ENCODE measurements at regions of chr16 and their contacts with region 1.

Region 1: DNA sequence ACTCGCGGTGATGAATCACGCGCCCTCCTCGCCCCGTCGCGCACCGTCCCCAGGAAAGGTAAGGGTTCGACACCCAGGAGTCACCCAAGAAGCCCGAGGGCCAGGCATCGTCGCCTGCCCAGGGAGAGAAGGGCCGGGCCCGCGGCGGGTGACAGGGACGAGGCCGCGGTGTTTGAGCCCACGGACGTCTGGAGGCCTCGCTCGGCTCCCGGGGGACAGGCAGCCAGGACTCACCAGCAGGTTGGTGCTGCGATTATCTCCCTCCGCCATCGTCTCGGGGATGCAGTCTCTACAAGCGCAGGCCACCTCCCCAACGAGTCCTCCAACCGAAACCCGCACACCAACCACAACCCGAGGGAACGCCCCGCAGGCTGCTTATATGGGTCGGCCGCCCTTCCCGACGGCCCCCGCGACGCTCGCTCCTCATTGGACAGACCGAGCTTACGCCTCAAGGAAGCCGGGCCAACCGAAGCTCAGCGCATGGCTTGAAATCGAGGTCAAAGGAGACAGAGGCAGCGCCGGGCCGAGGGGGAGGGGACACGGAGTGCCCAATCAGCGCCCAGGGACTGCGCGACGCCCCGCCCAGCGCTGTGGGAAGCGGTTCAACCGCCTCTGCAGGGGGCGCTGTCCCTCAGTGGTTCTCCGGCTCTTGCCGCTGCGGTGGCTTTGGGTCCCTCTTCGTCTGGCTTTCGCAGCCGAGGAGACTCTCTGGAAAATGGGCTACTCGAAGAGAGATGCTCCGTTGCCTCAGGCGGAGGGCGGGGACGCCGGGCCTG is at the start of gene ARL6IP1:
- DNase-seq: peak; percentile 99 to 100 (median 100)
- H3K4me3 ChIP-seq: peak within 1 kb of the TSS; percentile 65 to 94 (median 92)
- H3K4me3 Mint-ChIP-seq: peak within 1 kb of the TSS; percentile 93 to 98
- H3K27ac ChIP-seq: peak within 1 kb of the TSS; percentile 93 to 95
- H3K27ac Mint-ChIP-seq: peak within 1 kb of the TSS; percentile 93 to 98 (median 95)
- H3K4me1 ChIP-seq: peaks cover 52 to 71% of the 10 kb centered on the region in 2 donors
- H3K4me1 Mint-ChIP-seq: peaks cover 64% of the 10 kb centered on the region
- H3K27me3 ChIP-seq: no peaks in the 10 kb centered on the region
- H3K27me3 Mint-ChIP-seq: no peaks in the 10 kb centered on the region
- CTCF ChIP-seq: peak; percentile 98
- polyA plus RNA-seq, gene ARL6IP1: 89.0 to 158 (median 142) TPM

Region 2: DNA sequence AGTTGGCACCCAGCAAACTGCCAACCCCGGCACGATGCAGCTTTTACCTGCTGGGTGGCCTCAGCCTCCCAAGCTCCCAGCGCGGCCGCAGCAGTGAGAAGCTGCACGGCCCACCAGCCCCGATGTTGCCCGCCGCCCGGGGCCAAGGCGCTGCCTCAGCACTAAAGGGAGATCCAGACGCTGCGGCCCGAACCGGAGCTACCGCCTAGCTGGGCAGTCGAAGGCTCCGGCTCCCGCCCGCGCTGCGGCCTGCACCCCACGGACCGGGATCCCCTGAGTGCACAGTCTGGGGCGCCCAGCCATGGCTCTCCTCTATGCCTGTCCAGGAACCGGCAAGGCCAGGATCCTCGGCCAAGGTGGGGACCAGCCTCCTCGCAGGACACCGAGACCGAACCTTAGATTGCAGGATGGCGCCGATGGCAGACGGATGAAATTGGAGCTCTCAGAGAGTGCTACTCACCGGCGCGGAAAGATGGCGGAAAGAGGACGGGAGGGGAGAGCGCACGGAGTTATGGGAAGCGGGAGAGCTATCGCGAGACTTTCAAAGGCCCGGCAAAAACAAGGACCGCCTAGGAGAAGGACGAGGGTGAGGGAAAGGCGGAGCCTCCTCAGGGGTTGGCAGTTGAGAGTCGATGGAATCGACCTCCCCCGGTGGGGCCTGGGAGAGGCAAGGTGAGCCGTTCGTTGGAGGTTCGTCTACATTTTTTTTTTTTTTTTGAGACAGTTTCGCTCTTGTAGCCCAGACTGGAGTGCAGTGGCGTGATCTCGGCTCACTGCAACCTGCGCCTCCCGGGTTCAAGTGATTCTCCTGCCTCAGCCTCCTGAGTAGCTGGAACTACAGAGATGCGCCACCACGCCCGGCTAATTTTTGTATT is 11.3 kb before region 1 on chr16 and contains the start of gene RPS15A:
- intact Hi-C with region 1: loop called in 1 of 2 experiments (anchors 1 kb)
- DNase-seq: peak; percentile 92 to 93 (median 92)
- H3K4me3 ChIP-seq: peak within 1 kb of the TSS; percentile 79 to 98 (median 93)
- H3K4me3 Mint-ChIP-seq: peak within 1 kb of the TSS; percentile 98
- H3K27ac ChIP-seq: peak within 1 kb of the TSS; percentile 71 to 85
- H3K27ac Mint-ChIP-seq: peak within 1 kb of the TSS; percentile 87 to 95 (median 92)
- H3K4me1 ChIP-seq: peaks cover 21 to 32% of the 10 kb centered on the region in 2 donors
- H3K4me1 Mint-ChIP-seq: peaks cover 44% of the 10 kb centered on the region
- H3K27me3 ChIP-seq: no peaks in the 10 kb centered on the region
- H3K27me3 Mint-ChIP-seq: no peaks in the 10 kb centered on the region
- CTCF ChIP-seq: no peak
- polyA plus RNA-seq, gene RPS15A: 1,209 to 2,855 (median 1,397) TPM

Region 3: GRCh38 chr16:18932243-18932981 is 131.0 kb after region 1 on chr16:
- intact Hi-C with region 1: loop called (anchors 5 kb)
- DNase-seq: no peak
- H3K4me3 ChIP-seq: no peak overlapping the region
- H3K4me3 Mint-ChIP-seq: no peak overlapping the region
- H3K27ac ChIP-seq: no peak overlapping the region
- H3K27ac Mint-ChIP-seq: no peak overlapping the region
- H3K4me1 ChIP-seq: no peaks in the 10 kb centered on the region
- H3K4me1 Mint-ChIP-seq: peaks cover 4% of the 10 kb centered on the region
- H3K27me3 ChIP-seq: no peaks in the 10 kb centered on the region
- H3K27me3 Mint-ChIP-seq: peaks cover 0 to 4% (median 3%) of the 10 kb centered on the region in 3 donors
- CTCF ChIP-seq: no peak

Region 4: GRCh38 chr16:19067349-19068236 is 266.2 kb after region 1 on chr16 and contains the start of gene COQ7:
- intact Hi-C with region 1: loop called in 1 of 2 experiments (anchors 5 kb)
- DNase-seq: peak; percentile 100
- H3K4me3 ChIP-seq: peak within 1 kb of the TSS; percentile 61 to 85 (median 76)
- H3K4me3 Mint-ChIP-seq: peak within 1 kb of the TSS; percentile 82 to 89
- H3K27ac ChIP-seq: peak within 1 kb of the TSS; percentile 92 to 99
- H3K27ac Mint-ChIP-seq: peak within 1 kb of the TSS; percentile 98 to 99 (median 99)
- H3K4me1 ChIP-seq: peaks cover 19 to 21% of the 10 kb centered on the region in 2 donors
- H3K4me1 Mint-ChIP-seq: peaks cover 17% of the 10 kb centered on the region
- H3K27me3 ChIP-seq: no peaks in the 10 kb centered on the region
- H3K27me3 Mint-ChIP-seq: peaks cover 0 to 3% (median 2%) of the 10 kb centered on the region in 3 donors
- CTCF ChIP-seq: no peak
- polyA plus RNA-seq, gene COQ7: 6.5 to 13.3 (median 12.2) TPM

Region 5: GRCh38 chr16:19521471-19522396 is 720.3 kb after region 1 on chr16 and contains the start of gene GDE1:
- intact Hi-C with region 1: loop called in 1 of 2 experiments (anchors 5 kb)
- DNase-seq: peak; percentile 81 to 89 (median 86)
- H3K4me3 ChIP-seq: peak within 1 kb of the TSS; percentile 71 to 97 (median 88)
- H3K4me3 Mint-ChIP-seq: peak within 1 kb of the TSS; percentile 95 to 98
- H3K27ac ChIP-seq: peak within 1 kb of the TSS; percentile 81 to 91
- H3K27ac Mint-ChIP-seq: peak within 1 kb of the TSS; percentile 87 to 94 (median 93)
- H3K4me1 ChIP-seq: peaks cover 34 to 63% of the 10 kb centered on the region in 2 donors
- H3K4me1 Mint-ChIP-seq: peaks cover 48% of the 10 kb centered on the region
- H3K27me3 ChIP-seq: no peaks in the 10 kb centered on the region
- H3K27me3 Mint-ChIP-seq: peaks cover 0 to 2% (median 0%) of the 10 kb centered on the region in 3 donors
- CTCF ChIP-seq: peak; percentile 24
- polyA plus RNA-seq, gene GDE1: 30.6 to 75.5 (median 71.7) TPM